AG04450 (cell line): ENCODE measurements at regions of chr16 and their contacts with region 1.

Region 1: DNA sequence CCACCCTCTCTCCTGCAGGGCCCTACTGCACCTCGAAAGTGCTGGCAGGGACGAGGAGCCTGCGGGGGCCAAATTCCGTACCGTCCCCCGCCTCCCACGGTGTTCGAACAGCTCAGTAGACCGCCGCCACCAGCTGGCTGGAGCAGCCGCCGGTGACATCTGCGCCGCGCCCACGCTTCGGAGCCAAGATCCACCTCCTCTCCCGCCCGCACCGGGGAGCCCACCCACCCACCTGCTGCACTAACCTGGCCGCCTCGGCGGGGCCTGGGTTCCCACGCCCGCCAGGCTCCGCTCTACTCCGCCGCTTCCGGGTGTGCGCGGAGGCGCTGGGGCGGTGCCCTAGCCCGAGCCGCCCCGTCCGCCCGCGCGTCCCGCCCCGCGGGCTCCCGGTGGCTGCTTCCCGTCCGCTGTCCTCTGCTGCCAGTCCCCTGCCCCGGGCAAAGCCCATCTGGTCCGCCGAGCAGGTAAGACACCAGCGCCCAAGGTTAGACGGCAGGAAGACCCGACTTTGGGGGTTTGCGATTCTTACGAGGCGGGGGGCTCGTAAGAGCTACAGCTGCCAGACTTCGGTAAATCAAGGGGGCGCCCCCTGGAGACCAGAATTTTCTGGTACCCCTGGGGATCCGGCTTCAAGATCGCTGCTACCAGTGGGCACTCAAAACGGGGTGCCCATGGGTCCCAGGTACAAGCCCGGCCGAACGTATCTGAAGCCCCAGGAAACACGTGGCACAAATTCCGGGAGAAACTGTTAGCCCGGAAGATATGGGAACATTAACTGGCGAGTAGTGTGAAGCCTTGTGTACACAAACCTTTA is at the starts of genes FBXL8 and TRADD:
- DNase-seq: no peak
- H3K4me3 ChIP-seq: peak within 1 kb of the TSS; percentile 92
- H3K27ac ChIP-seq: peak within 1 kb of the TSS; percentile 31
- H3K27me3 ChIP-seq: peaks cover 30% of the 10 kb centered on the region
- CTCF ChIP-seq: peak; percentile 64
- polyA plus RNA-seq, gene FBXL8: 2.7 and 3.2 TPM in 2 replicates
- polyA plus RNA-seq, gene TRADD: 9.4 and 10.9 TPM in 2 replicates

Region 2: GRCh38 chr16:66961065-66961744 is 198.6 kb before region 1 on chr16 and contains the start of gene CES3:
- CTCF ChIA-PET with region 1: interaction called, 19 read pairs
- POLR2A ChIA-PET with region 1: interaction called, 6 read pairs
- DNase-seq: peak; percentile 20
- H3K4me3 ChIP-seq: no peak within 1 kb of the TSS
- H3K27ac ChIP-seq: no peak within 1 kb of the TSS
- H3K27me3 ChIP-seq: peaks cover 29% of the 10 kb centered on the region
- CTCF ChIP-seq: peak; percentile 80
- polyA plus RNA-seq, gene CES3: 0.06 and 0.12 TPM in 2 replicates

Region 3: DNA sequence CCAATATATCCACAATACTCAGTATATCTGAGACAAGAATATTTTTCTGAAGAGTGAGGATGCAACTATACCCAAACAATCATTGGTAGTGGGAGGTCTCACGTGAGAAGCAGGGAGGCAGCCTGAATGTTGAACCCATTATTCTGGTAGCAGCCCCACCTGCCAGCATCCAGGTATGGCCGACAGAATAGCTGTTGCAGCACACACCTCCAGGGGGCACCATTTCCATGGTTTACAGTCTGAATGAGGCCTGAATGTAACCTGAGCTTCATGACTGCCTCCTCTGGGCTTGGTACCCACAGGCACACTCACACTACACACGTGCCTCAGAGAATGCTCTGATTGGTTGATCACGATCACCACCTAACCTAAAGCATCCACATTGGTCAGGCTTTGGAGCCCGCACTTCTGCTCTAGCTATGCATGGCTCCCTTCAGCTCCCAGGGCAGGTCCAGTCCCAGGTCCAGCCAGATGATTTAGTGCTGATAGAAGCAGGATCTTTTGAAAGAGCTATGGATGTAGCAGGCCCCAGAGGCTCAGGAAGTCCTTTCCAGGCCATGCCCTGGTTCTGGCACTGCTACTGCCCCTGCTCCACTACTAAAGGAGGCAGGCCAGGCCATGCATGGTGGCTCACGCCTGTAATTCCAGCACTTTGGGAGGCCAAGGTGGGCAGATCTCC is 141.9 kb before region 1 on chr16:
- CTCF ChIA-PET with region 1: interaction called, 62 read pairs
- POLR2A ChIA-PET with region 1: interaction called, 3 read pairs
- DNase-seq: peak; percentile 77
- H3K4me3 ChIP-seq: no peak overlapping the region
- H3K27ac ChIP-seq: no peak overlapping the region
- H3K27me3 ChIP-seq: peaks cover 13% of the 10 kb centered on the region
- CTCF ChIP-seq: peak; percentile 74

Region 4: DNA sequence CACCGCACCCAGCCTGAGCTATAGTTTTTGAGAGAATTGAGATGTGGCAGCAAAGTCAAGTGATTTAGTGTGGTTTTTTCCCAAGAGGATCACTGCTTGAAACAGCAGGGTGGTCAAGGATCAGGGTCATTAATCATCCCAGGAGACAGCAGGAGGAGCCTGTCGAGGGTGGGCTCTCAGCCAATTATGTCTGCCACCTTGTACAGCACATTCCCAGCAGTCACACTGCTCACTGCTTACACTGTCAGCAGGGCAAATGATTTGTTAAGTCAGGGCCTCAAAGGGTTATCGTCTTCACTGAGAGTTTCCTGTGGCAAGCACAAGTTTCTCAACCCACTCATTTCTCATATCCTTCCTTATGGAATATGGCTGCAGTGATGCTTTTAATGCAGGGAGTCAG is 22.2 kb before region 1 on chr16:
- CTCF ChIA-PET with region 1: interaction called, 15 read pairs
- POLR2A ChIA-PET with region 1: no interaction called
- DNase-seq: no peak
- H3K4me3 ChIP-seq: no peak overlapping the region
- H3K27ac ChIP-seq: no peak overlapping the region
- H3K27me3 ChIP-seq: no peaks in the 10 kb centered on the region
- CTCF ChIP-seq: no peak

Region 5: DNA sequence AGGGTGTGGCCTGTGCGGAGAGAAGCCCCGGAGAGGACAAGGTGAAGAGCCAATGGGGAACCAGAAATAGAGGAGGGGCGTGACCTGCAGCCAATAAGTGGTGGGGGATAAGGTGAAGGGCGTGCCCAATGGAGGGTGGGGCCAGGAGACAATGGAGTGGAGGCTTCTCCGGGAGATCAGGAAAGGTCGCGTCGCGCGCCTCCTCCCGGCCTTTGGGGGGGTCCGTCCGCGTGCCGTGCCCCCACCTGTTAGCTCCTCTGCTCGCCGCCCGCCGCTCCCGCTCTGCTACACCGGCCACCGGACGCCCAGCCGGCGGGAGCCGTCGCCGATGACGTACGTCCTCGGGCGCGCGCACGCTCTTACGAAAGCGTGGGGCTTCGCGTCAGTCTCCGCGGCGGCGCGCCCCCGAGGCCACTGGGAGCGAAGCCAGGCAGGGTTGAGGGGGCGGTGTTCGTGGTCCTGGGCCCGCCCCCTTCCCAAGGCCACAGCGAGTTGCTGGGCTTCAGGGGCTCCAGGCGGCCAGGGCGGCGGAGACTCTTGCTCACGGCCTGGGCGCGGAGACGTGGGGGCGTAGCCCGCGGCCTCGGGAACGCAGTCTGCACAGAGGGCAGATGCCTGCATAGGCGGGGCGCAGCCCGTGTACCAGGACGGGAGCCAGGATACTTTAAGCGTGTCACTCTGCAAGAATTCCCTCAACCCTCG is 24.0 kb after region 1 on chr16 and contains the start of gene MATCAP1:
- CTCF ChIA-PET with region 1: interaction called, 16 read pairs
- POLR2A ChIA-PET with region 1: interaction called, 4 read pairs
- DNase-seq: peak; percentile 90
- H3K4me3 ChIP-seq: peak within 1 kb of the TSS; percentile 71
- H3K27ac ChIP-seq: peak within 1 kb of the TSS; percentile 88
- H3K27me3 ChIP-seq: no peaks in the 10 kb centered on the region
- CTCF ChIP-seq: no peak
- polyA plus RNA-seq, gene MATCAP1: 13.9 and 18.1 TPM in 2 replicates